H1 (cell line): ENCODE measurements at regions of chr1 and their contacts with region 1.

Region 1: GRCh38 chr1:206912445-206913095 is 9.2 kb downstream of the FCMR start:
- DNase-seq: peak in 1 of 2 experiments; percentile 67
- H3K4me3 ChIP-seq: no peak overlapping the region
- H3K27ac ChIP-seq: no peak overlapping the region
- H3K4me1 ChIP-seq: peaks cover 0 to 7% (median under 1%) of the 10 kb centered on the region in 4 experiments; a peak in 2 of 7 replicates
- H3K27me3 ChIP-seq: peaks cover 8 to 30% (median 27%) of the 10 kb centered on the region in 4 experiments
- CTCF ChIP-seq: peak; percentile 69 to 90 (median 87)
- EP300 ChIP-seq: no peak
- POLR2A ChIP-seq: no peak
- RAD21 ChIP-seq: peak; percentile 80 to 87

Region 2: GRCh38 chr1:206734499-206735142 is 177.9 kb before region 1 on chr1:
- CTCF ChIA-PET with region 1: interaction called, 81 read pairs
- POLR2A ChIA-PET with region 1: no interaction called
- DNase-seq: peak in 1 of 2 experiments; percentile 94
- H3K4me3 ChIP-seq: no peak overlapping the region
- H3K27ac ChIP-seq: no peak overlapping the region
- H3K4me1 ChIP-seq: peaks cover 0 to 3% (median 0%) of the 10 kb centered on the region in 4 experiments; a peak in 2 of 7 replicates
- H3K27me3 ChIP-seq: no peaks in the 10 kb centered on the region
- CTCF ChIP-seq: peak; percentile 66 to 87 (median 86)
- EP300 ChIP-seq: no peak
- POLR2A ChIP-seq: no peak
- RAD21 ChIP-seq: peak; percentile 80 to 84

Region 3: DNA sequence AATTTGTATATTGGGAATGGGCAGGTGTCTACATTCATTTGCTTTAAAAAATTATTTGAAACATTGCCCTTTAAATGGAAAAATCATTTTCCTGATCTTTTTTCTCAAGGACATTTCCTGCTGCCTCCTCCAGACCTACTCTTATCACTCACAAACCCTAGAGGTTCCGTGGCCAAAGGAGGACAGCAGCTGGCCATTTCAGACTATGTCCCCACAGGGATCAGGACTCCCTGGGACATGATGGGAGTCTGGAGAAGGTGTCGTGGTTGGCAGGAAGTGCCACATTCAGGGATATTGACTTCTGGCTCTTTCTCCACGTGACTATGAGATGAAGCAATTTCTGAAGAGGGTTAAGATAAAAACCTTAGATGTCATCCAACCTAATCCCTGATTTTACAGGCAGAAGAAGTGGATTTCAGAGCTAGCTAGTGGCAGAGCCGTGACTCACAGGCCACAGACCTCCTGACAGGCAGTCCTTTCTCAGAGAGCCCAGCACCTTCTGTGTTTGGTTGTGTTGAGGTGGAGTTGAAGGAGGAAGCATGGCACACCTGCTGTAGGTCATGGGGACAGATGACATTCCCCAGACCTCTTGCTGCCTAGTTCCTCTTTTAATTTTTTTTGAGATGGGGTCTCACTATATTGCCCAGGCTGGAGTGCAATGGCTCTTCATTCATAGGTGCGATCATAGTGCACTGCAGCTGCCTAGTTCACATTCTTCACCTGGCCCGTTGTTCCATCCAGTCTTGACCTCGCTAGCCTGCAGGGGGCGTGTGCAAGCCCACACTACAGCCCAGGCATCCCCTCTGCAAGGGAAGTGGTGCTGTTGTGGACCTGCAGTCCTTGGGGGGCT is 114.8 kb before region 1 on chr1:
- CTCF ChIA-PET with region 1: interaction called, 24 read pairs
- POLR2A ChIA-PET with region 1: no interaction called
- DNase-seq: peak; percentile 25 to 69
- H3K4me3 ChIP-seq: no peak overlapping the region
- H3K27ac ChIP-seq: no peak overlapping the region
- H3K4me1 ChIP-seq: no peaks in the 10 kb centered on the region
- H3K27me3 ChIP-seq: no peaks in the 10 kb centered on the region
- CTCF ChIP-seq: peak; percentile 71 to 98 (median 91)
- EP300 ChIP-seq: no peak
- POLR2A ChIP-seq: no peak
- RAD21 ChIP-seq: peak; percentile 49 to 64

Region 4: GRCh38 chr1:206856674-206857464 is 55.7 kb before region 1 on chr1:
- CTCF ChIA-PET with region 1: interaction called, 60 read pairs
- POLR2A ChIA-PET with region 1: no interaction called
- DNase-seq: no peak
- H3K4me3 ChIP-seq: no peak overlapping the region
- H3K27ac ChIP-seq: no peak overlapping the region
- H3K4me1 ChIP-seq: no peaks in the 10 kb centered on the region
- H3K27me3 ChIP-seq: no peaks in the 10 kb centered on the region
- CTCF ChIP-seq: peak; percentile 39 to 47 (median 46)
- EP300 ChIP-seq: no peak
- POLR2A ChIP-seq: no peak
- RAD21 ChIP-seq: 0 out of 4 replicates have a peak, but pooled peaks have one; percentile 1 to 22

Region 5: GRCh38 chr1:206887701-206888100 is 24.9 kb before region 1 on chr1:
- CTCF ChIA-PET with region 1: interaction called, 15 read pairs
- POLR2A ChIA-PET with region 1: no interaction called
- DNase-seq: no peak
- H3K4me3 ChIP-seq: no peak overlapping the region
- H3K27ac ChIP-seq: no peak overlapping the region
- H3K4me1 ChIP-seq: peaks cover 0 to 3% (median 1%) of the 10 kb centered on the region in 4 experiments; a peak in 3 of 7 replicates
- H3K27me3 ChIP-seq: no peaks in the 10 kb centered on the region
- CTCF ChIP-seq: no peak
- EP300 ChIP-seq: no peak
- POLR2A ChIP-seq: no peak
- RAD21 ChIP-seq: no peak

Region 6: DNA sequence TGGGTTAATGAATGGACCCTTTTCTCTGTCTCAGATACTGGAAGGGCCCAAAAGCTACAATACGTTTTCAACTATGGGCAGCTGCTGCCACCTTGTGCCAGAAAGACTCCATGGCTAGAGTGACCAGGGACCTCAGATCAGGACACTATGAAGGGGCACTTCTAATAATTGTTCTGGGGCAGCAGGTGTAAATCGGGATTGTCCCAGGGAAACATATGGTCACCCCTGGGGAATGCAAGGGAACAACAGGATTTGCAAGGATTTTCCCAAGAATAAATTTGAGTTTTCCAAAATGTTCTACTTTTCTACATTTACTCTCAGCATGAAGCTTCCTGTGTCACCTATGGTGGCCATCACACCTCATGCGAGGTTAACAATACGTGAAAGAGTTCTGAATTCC is 69.6 kb after region 1 on chr1:
- CTCF ChIA-PET with region 1: interaction called, 111 read pairs
- POLR2A ChIA-PET with region 1: no interaction called
- DNase-seq: peak in 1 of 2 experiments; percentile 65
- H3K4me3 ChIP-seq: no peak overlapping the region
- H3K27ac ChIP-seq: no peak overlapping the region
- H3K4me1 ChIP-seq: peaks cover 4 to 15% (median 8%) of the 10 kb centered on the region in 4 experiments
- H3K27me3 ChIP-seq: no peaks in the 10 kb centered on the region; a peak in 1 of 7 replicates
- CTCF ChIP-seq: peak; percentile 49 to 86 (median 76)
- EP300 ChIP-seq: no peak
- POLR2A ChIP-seq: no peak
- RAD21 ChIP-seq: peak; percentile 88 to 92